ENCODE measurements at regions of chr5 and their contacts with region 1.

Region 1: DNA sequence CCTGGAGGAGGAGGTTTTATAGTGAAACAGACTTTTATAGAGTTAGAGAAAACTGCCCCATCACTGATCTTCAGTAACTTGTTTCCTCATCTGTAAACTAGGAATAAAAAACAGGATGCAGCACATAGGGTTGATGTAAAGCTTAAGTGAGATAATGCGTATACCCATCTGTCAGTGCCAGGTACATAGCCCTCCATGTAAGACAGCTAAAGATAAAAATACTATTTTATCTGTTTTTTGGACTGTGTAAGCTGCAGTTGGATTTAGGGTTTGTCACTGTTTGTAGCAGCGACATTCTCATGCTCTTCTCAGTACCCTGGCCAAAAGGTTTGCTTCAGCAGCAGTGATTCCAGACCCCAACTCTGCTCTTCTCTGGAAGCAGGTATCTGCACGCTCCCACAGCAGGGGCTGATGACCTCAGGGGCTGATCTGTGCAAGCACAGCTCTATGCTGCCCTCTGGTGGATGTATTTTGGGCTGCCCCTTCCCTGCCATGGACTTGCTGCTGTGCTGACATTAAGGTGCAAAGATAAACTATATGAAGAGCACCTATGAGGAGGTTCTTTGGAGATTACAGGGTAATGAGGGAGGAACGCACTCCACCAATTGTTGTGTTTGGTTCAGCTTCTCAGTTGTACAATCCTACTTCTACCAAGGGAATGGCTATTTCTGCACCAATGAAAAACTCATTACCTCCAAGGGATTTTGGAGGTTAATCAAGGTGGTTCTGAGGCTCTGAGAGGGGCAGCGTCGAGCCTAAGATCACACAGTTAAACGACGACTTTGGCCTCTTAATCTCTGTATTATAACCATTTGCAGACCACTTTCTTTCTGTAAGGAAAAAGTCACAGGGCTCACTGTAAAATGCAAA is 13.1 kb downstream of the HMHB1 start:
- DNase-seq: peak; percentile 76 to 88
- ATAC-seq: peak; percentile 94 to 98 (median 96)
- H3K4me3 ChIP-seq: no peak overlapping the region
- H3K27ac ChIP-seq: no peak overlapping the region
- H3K4me1 ChIP-seq: peaks cover 0 to 13% (median 6%) of the 10 kb centered on the region in 9 donors
- H3K27me3 ChIP-seq: no peaks in the 10 kb centered on the region
- CTCF ChIP-seq: peak; percentile 92 to 99 (median 96)

Region 2: GRCh38 chr5:143002459-143003328 is 822.4 kb before region 1 on chr5:
- intact Hi-C with region 1: loop called in 7 of 10 experiments (anchors 5 to 10 kb)
- DNase-seq: peak in 1 of 2 donors; percentile 51
- ATAC-seq: peak; percentile 79 to 92 (median 84)
- H3K4me3 ChIP-seq: peak overlapping the region in 2 of 10 donors; percentile 11 to 12
- H3K27ac ChIP-seq: peak overlapping the region in 9 of 10 donors; percentile 23 to 90 (median 73)
- H3K4me1 ChIP-seq: peaks cover 10 to 82% (median 59%) of the 10 kb centered on the region in 9 donors
- H3K27me3 ChIP-seq: no peaks in the 10 kb centered on the region
- CTCF ChIP-seq: peak; percentile 8 to 71 (median 55)

Region 3: GRCh38 chr5:143106174-143106573 is 718.9 kb before region 1 on chr5:
- intact Hi-C with region 1: loop called in 4 of 10 experiments (anchors 5 to 10 kb)
- DNase-seq: peak; percentile 20 to 51
- ATAC-seq: peak; percentile 67 to 86 (median 77)
- H3K4me3 ChIP-seq: no peak overlapping the region
- H3K27ac ChIP-seq: peak overlapping the region in 1 of 10 donors; percentile 19
- H3K4me1 ChIP-seq: peaks cover 0 to 77% (median 61%) of the 10 kb centered on the region in 9 donors
- H3K27me3 ChIP-seq: no peaks in the 10 kb centered on the region
- CTCF ChIP-seq: peak in 7 of 9 donors; percentile 27 to 60 (median 35)

Region 4: DNA sequence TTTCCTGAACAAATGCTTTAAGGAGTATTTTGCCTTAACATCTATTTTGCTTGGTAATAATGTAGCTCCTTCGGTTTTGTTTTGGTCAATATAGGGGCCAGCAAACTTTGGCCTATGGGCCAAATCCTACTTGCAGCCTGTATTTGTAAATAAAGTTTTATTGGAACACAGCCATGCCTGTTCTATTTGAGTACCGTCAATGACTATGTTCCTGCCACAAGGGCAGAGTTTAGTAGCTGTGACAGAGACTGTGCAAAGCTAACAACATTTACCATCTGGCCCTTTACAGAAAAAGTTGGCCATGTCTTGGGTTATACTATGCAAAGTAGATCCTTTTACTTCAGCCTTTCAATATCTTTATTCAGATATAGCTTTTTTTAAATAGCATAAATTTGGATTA is 535.0 kb before region 1 on chr5:
- intact Hi-C with region 1: loop called in 1 of 10 experiments (anchors 10 kb)
- DNase-seq: no peak
- ATAC-seq: no peak
- H3K4me3 ChIP-seq: no peak overlapping the region
- H3K27ac ChIP-seq: no peak overlapping the region
- H3K4me1 ChIP-seq: peaks cover 0 to 13% (median 0%) of the 10 kb centered on the region in 9 donors
- H3K27me3 ChIP-seq: no peaks in the 10 kb centered on the region
- CTCF ChIP-seq: no peak

Region 5: DNA sequence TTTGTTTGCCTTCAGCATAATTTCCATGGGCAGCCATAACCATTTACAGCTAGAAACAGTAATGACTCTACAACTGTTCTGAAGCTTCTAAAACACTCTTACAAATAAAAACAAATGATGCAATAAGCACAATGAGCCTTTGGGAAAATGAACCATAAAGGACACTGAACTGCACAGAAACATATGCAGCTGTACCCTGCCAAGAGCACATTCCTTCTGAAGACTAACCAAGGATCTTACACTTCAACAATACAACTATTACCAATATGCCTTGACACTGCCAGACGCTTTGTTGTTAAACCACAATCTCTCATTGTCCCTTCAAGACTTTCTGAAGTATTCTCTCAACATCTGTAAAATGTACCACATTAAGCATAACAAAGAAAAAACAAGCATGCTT is 117.3 kb before region 1 on chr5:
- intact Hi-C with region 1: loop called in 2 of 10 experiments (anchors 10 kb)
- DNase-seq: no peak
- ATAC-seq: no peak
- H3K4me3 ChIP-seq: no peak overlapping the region
- H3K27ac ChIP-seq: no peak overlapping the region
- H3K4me1 ChIP-seq: peaks cover 0 to 18% (median 3%) of the 10 kb centered on the region in 9 donors
- H3K27me3 ChIP-seq: no peaks in the 10 kb centered on the region
- CTCF ChIP-seq: no peak

Region 6: GRCh38 chr5:143986501-143987212 is 161.6 kb after region 1 on chr5:
- intact Hi-C with region 1: no loop called
- DNase-seq: no peak
- ATAC-seq: peak in 5 of 8 donors; percentile 22 to 89 (median 69)
- H3K4me3 ChIP-seq: no peak overlapping the region
- H3K27ac ChIP-seq: peak overlapping the region in 4 of 10 donors; percentile 3 to 33 (median 18)
- H3K4me1 ChIP-seq: peaks cover 0 to 6% (median 0%) of the 10 kb centered on the region in 9 donors
- H3K27me3 ChIP-seq: no peaks in the 10 kb centered on the region
- CTCF ChIP-seq: no peak